Dorsolateral prefrontal cortex (tissue), 120 donors: ENCODE measurements at regions of chr1 and their contacts with region 1.

Region 1: GRCh38 chr1:28877132-28877781 is 37.1 kb upstream of the EPB41 start:
- DNase-seq: peak; percentile 56 to 86 (median 78)
- H3K4me3 ChIP-seq: peak overlapping the region in 6 of 59 donors; percentile 2 to 18 (median 12)
- H3K27ac ChIP-seq: no peak overlapping the region
- H3K27me3 ChIP-seq: no peaks in the 10 kb centered on the region
- CTCF ChIP-seq: peak in 55 of 56 donors; percentile 84 to 99 (median 96)

Region 2: GRCh38 chr1:28359592-28360239 is 517.5 kb before region 1 on chr1:
- intact Hi-C with region 1: loop called in 1 of 2 experiments (anchors 10 kb)
- DNase-seq: peak in 9 of 10 donors; percentile 62 to 82 (median 70)
- H3K4me3 ChIP-seq: no peak overlapping the region
- H3K27ac ChIP-seq: no peak overlapping the region
- H3K27me3 ChIP-seq: no peaks in the 10 kb centered on the region
- CTCF ChIP-seq: peak; percentile 53 to 86 (median 72)

Region 3: GRCh38 chr1:28642847-28643635 is 234.2 kb before region 1 on chr1 and contains the start of gene TAF12:
- intact Hi-C with region 1: loop called in 1 of 2 experiments (anchors 5 kb)
- DNase-seq: peak; percentile 80 to 92 (median 86)
- H3K4me3 ChIP-seq: peak within 1 kb of the TSS; percentile 57 to 98 (median 84)
- H3K27ac ChIP-seq: peak within 1 kb of the TSS; percentile 52 to 95 (median 90)
- H3K27me3 ChIP-seq: no peaks in the 10 kb centered on the region
- CTCF ChIP-seq: peak in 55 of 56 donors; percentile 29 to 87 (median 62)
- total RNA-seq, gene TAF12: 10.2 to 23.1 (median 15.5) TPM

Region 4: DNA sequence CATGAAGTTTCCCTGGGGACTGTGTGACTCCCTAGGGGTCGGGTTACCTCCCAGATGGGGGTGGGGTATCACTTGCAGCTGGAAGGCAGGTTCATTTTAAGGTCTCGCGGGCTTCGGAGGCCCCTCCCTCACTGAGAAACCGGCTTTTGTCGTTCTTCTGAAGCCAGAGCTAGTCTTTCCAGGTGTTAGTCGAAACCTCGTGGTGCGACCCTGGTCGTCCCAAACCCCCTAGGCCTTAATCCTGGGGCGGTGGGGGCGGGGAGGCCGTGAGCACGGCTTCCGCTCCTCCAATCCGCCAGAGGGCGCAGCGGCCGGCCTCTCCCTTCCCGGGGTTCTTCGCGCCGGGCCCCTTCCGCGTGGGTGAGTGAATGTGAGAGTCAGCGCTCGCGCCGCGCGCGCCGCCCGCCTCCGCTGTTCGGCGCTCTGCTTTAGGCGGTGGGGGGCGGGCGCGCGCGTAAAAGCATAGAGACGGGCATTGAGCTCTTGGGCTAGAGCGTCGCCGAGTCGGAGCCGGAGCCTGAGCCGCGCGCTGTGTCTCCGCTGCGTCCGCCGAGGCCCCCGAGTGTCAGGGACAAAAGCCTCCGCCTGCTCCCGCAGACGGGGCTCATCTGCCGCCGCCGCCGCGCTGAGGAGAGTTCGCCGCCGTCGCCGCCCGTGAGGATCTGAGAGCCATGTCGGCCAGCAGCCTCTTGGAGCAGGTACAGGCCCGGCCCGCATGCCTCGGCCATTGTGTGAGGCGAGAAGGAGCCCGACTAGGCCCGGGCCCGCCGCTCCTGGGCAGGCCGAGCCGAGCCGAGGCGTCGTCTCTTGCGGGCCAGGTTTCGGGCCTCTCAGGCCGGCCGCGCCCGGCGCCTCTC is 140.6 kb before region 1 on chr1 and contains the start of gene YTHDF2:
- intact Hi-C with region 1: loop called in 1 of 2 experiments (anchors 5 kb)
- DNase-seq: peak; percentile 91 to 96 (median 94)
- H3K4me3 ChIP-seq: peak within 1 kb of the TSS; percentile 68 to 100 (median 95)
- H3K27ac ChIP-seq: peak within 1 kb of the TSS; percentile 65 to 97 (median 92)
- H3K27me3 ChIP-seq: no peaks in the 10 kb centered on the region
- CTCF ChIP-seq: peak; percentile 88 to 100 (median 98)
- total RNA-seq, gene YTHDF2: 23.5 to 67.2 (median 47.9) TPM

Region 5: DNA sequence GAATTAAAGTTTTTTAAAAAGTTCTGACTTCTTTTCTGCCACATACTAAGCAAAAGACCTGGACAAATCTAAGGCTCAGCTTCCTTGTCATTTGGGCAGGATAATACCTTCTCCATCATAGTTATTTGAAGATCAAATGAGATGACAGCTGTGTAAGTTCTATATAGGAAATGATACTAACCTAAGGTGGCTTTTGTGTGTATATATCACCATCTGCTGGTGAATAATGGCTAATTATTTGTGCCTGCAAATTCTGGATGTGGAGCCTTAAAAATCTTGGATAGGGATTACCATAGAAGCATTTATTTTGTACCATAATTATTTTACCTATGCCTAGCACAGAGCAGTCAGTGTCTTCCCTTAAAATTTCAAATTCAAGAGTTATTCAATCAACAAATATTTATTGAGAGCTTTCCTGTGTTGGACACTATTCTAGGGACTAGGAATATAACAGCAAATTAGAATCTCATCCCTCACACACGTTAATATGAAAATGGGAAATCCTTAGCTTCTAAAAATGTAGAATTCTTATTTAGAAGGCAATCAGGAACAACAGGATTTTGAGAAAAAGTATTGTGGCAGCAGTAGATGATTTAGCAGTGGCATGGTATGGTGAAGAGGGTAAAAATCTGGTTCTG is 156.7 kb after region 1 on chr1:
- intact Hi-C with region 1: loop called (anchors 2 kb)
- DNase-seq: no peak
- H3K4me3 ChIP-seq: no peak overlapping the region
- H3K27ac ChIP-seq: no peak overlapping the region
- H3K27me3 ChIP-seq: no peaks in the 10 kb centered on the region
- CTCF ChIP-seq: peak; percentile 41 to 93 (median 77)

Region 6: GRCh38 chr1:29202584-29203340 is 325.5 kb after region 1 on chr1:
- intact Hi-C with region 1: loop called in 1 of 2 experiments (anchors 2 kb)
- DNase-seq: peak; percentile 89 to 97 (median 94)
- H3K4me3 ChIP-seq: peak overlapping the region in 2 of 59 donors; percentile 10 to 21
- H3K27ac ChIP-seq: peak overlapping the region in 43 of 59 donors; percentile 14 to 78 (median 54)
- H3K27me3 ChIP-seq: no peaks in the 10 kb centered on the region
- CTCF ChIP-seq: peak; percentile 88 to 100 (median 98)